Lower leg skin (tissue), 4 donors: ENCODE measurements at regions of chr13 and their contacts with region 1.

Region 1: DNA sequence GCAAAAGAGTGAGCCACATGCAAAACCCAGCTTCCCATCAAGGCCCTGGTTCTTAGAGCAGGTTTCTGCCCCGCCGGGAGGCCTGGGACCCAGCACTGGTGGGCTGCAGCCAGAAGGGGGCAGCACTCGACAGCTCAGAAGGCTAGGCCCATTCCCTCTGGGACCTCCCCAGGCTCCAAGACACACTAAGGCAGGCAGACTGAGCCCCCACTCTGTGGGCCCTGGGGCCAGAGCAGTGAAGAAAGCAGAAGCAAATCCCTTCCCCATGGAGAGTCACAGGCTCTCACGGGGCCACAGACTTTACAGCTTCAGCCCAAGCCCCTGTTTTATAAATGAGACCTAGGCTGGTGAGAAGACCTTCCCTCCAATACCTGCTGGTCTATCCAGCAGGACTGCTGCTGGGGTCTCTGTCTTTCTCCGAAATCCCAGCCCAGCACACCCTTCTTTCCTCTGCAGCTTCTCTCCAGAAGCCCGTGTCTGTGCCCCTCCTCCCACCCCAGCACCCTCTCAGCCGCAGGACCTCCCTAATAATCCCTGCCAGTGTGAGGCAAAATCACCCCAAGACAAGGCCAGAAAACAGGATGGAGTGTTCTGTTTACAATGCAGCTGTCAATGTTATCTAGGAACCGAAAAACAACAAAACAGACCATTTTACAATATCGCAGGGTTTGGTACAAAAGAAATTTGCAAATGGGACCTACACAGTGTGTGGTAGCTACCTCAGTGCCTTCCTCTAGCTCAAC is 109.3 kb downstream of the ABCC4 start:
- DNase-seq: peak; percentile 35 to 88
- H3K4me3 ChIP-seq: no peak overlapping the region
- CTCF ChIP-seq: no peak
- POLR2A ChIP-seq: no peak

Region 2: DNA sequence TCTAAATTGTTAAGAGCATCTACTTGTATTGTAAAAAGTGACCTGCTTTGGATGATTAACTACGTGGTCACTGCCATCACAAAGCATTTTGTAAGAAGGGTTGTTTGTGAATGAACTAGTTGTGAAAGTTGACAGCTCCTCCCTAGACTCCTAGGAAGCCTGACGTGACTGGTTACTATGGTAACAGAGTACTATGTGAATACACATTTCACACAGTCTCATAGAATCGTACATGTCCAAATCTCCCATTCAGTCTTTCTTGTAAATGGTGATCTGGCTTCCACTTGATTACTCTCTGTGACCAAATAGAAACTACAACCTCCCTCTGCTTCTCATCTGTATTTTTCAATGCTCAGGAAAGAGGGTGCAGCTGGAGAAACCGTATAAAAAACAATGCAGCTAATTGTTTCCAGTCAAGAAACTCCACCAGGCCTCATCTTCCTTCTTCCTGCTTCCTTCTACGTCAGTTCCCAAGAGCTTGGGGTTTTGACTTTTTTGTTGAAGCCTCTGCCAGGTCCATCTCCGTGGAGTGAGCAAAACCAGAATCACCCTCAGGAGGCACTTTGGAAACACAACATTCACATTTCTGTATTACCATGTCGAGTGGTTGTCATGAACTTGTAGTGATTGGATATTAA is 1882.0 kb before region 1 on chr13:
- intact Hi-C with region 1: no loop called
- DNase-seq: no peak
- H3K4me3 ChIP-seq: no peak overlapping the region
- CTCF ChIP-seq: no peak
- POLR2A ChIP-seq: no peak

Region 3: DNA sequence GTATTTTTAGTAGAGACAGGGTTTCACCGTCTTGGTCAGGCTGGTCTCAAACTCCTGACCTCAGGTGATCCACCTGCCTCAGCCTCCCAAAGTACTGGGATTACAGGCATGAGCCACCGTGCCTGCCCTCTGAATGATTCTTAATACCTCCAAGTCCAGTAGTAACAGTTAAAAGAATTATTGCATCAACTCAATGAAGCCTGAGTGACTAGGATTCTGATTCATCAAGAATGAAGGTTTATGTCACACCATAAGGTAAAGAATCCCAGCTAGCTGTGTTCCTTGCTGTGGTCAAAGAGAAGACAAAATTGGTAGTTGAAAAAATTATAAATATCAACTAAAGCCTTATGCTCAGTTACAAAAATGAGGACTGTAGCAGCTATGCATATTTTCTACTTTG is 190.4 kb after region 1 on chr13:
- intact Hi-C with region 1: loop called (anchors 5 kb)
- DNase-seq: no peak
- H3K4me3 ChIP-seq: no peak overlapping the region
- CTCF ChIP-seq: no peak
- POLR2A ChIP-seq: no peak

Region 4: DNA sequence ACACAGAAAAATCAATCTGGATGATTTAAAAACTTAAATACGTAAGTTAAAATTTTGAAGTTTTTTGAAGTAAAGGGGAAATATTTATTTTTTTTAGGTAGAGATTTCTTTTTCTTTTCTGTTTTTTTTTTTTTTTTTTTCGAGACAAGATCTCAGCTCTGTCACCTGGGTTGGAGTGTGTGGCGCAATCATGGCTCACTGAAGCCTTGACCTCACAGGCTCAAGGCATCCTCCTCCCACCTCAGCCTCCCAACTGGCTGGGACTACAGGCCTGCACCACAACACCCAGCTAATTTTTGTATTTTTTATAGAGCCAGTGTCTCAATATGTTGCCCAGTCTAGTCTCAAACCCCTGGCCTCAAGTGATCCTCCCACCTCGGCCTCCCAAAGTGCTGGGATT is 240.1 kb after region 1 on chr13:
- intact Hi-C with region 1: no loop called
- DNase-seq: no peak
- H3K4me3 ChIP-seq: no peak overlapping the region
- CTCF ChIP-seq: no peak
- POLR2A ChIP-seq: no peak